HepG2 (cell line): ENCODE measurements at regions of chr6 and their contacts with region 1.

Region 1: GRCh38 chr6:75208298-75209183 is 2.7 kb upstream of the COL12A1 start:
- DNase-seq: peak; percentile 58
- ATAC-seq: peak; percentile 91
- H3K4me3 ChIP-seq: no peak overlapping the region
- H3K27ac ChIP-seq: no peak overlapping the region
- H3K4me1 ChIP-seq: no peaks in the 10 kb centered on the region; the same call in 1 of the 2 replicates
- H3K27me3 ChIP-seq: peaks cover 5 to 51% of the 10 kb centered on the region in 2 experiments; a peak in 4 of 5 replicates
- CTCF ChIP-seq: peak; percentile 89
- EP300 ChIP-seq: no peak
- POLR2A ChIP-seq: no peak
- RAD21 ChIP-seq: peak; percentile 80

Region 2: DNA sequence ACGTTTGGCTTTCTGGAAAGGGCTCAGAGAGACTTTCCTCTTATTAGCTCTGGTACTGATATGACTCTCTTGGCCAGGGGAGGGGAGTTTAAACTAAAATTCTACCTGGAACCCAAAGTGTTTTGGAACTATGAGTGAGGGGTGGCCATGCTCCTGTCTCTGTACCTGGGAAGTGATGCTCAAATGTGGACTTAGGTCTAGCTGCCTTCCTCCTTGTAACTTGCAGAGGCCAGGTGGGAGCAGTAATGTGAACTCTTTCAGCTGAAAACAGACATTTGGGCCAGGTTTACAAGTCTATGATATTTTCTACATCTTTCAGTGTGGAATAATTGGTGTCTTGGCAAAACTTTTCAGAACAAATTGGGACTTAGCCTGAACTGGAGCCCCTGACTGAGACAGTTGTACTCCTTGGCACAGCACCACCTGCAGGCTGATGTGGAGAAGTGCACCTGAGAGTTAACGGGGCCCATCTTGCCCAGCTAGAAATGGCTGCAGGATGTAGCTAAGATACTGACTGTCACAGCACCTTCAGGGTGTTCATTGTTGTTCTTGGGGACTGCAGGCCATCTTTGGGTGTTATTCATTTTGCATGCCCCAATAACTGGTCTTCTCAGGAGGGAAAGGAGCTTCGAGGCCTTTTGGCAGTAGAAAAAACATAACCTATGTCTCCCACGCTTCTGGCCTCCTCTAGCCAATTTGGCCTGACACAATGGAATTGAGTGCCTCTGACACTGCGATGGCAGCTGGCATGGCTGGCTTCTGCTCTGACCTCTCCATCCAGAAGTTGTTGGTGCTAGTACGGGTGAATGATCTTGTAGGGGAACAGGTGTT is 1475.5 kb before region 1 on chr6:
- CTCF ChIA-PET with region 1: no interaction called
- POLR2A ChIA-PET with region 1: no interaction called
- in situ Hi-C with region 1: loop called (anchors 25 kb)
- intact Hi-C with region 1: no loop called
- DNase-seq: peak; percentile 53
- ATAC-seq: peak; percentile 97
- H3K4me3 ChIP-seq: no peak overlapping the region
- H3K27ac ChIP-seq: no peak overlapping the region
- H3K4me1 ChIP-seq: no peaks in the 10 kb centered on the region
- H3K27me3 ChIP-seq: no peaks in the 10 kb centered on the region
- CTCF ChIP-seq: peak; percentile 89
- EP300 ChIP-seq: no peak
- POLR2A ChIP-seq: no peak
- RAD21 ChIP-seq: peak; percentile 46; the same call in 1 of the 2 replicates

Region 3: DNA sequence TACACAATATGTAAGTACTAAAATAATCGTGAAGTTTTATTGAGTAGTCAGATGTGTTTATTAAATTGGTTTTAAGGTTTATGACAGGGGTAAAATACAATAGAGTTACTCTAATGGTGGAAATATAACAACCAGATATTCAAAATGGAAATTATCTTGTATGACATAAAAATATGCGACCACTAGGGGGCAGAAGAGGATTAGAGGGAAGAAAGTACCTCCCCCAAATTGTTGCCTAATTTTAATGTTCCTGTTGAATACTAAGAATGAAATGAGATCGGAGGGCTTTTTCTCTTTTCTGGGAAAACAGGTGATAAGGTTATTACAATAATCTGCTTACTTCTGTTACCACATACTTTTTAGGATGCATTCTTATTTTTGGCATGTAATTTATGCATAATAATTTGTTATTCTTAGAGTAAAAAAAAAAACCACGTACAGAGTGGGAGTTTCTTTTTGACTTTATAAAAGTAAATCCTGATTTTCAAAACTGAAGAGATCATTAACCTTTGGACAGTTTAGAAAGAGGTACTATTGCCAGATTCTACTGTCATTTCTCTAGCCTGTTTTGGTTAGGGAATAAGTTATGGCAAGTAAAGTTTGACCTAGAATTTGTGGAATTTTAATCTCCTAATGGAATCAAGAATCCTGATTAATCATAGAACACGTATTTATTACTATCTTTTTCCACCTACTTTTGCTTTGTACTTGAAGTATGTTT is 1353.4 kb before region 1 on chr6:
- CTCF ChIA-PET with region 1: interaction called, 7 read pairs
- POLR2A ChIA-PET with region 1: no interaction called
- in situ Hi-C with region 1: no loop called
- intact Hi-C with region 1: loop called (anchors 10 kb)
- DNase-seq: peak; percentile 46
- ATAC-seq: no peak
- H3K4me3 ChIP-seq: no peak overlapping the region
- H3K27ac ChIP-seq: no peak overlapping the region
- H3K4me1 ChIP-seq: no peaks in the 10 kb centered on the region
- H3K27me3 ChIP-seq: no peaks in the 10 kb centered on the region
- CTCF ChIP-seq: peak; percentile 54
- EP300 ChIP-seq: no peak
- POLR2A ChIP-seq: no peak
- RAD21 ChIP-seq: no peak

Region 4: DNA sequence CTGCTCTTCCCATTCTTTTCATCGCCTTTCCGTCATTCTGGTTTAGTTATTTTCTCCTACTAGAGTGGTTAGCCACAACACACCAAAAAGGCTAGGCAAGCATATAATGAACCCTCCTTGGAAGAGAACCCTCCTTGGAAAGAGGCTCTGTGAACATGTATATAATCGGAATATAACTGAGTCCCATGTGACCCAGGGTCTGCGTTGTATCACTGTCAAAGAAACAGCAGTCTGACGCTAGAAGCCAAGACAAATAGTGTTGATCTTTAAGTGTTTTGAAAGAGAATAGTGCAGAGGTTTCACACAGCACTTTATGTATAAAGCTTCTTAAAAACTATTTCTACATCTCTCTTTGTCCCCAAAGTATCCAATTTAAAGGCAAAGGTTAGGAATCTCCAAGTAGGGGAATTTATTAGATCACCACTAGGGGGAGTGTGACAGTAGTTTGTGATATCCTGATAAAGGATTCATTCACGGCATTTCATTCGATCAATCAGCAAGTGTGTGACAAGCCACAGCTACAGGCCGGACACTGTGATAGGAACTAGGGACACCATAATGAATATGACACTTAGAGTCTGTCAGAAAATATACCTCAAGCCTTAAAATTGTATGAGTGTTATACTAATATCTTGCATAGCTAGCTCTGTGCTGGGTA is 1117.3 kb before region 1 on chr6:
- CTCF ChIA-PET with region 1: interaction called, 7 read pairs
- POLR2A ChIA-PET with region 1: no interaction called
- in situ Hi-C with region 1: loop called (anchors 10 kb)
- intact Hi-C with region 1: loop called (anchors 1 kb)
- DNase-seq: peak; percentile 45
- ATAC-seq: peak; percentile 85
- H3K4me3 ChIP-seq: no peak overlapping the region
- H3K27ac ChIP-seq: no peak overlapping the region
- H3K4me1 ChIP-seq: no peaks in the 10 kb centered on the region
- H3K27me3 ChIP-seq: no peaks in the 10 kb centered on the region
- CTCF ChIP-seq: peak; percentile 61
- EP300 ChIP-seq: no peak
- POLR2A ChIP-seq: no peak
- RAD21 ChIP-seq: no peak

Region 5: GRCh38 chr6:74409447-74409846 is 799.1 kb before region 1 on chr6:
- CTCF ChIA-PET with region 1: interaction called, 5 read pairs
- POLR2A ChIA-PET with region 1: no interaction called
- in situ Hi-C with region 1: loop called (anchors 25 kb)
- intact Hi-C with region 1: loop called (anchors 2 kb)
- DNase-seq: peak; percentile 36
- ATAC-seq: peak; percentile 78
- H3K4me3 ChIP-seq: no peak overlapping the region
- H3K27ac ChIP-seq: no peak overlapping the region
- H3K4me1 ChIP-seq: no peaks in the 10 kb centered on the region
- H3K27me3 ChIP-seq: no peaks in the 10 kb centered on the region
- CTCF ChIP-seq: peak; percentile 64
- EP300 ChIP-seq: no peak
- POLR2A ChIP-seq: no peak
- RAD21 ChIP-seq: peak; percentile 61; the same call in 1 of the 2 replicates

Region 6: DNA sequence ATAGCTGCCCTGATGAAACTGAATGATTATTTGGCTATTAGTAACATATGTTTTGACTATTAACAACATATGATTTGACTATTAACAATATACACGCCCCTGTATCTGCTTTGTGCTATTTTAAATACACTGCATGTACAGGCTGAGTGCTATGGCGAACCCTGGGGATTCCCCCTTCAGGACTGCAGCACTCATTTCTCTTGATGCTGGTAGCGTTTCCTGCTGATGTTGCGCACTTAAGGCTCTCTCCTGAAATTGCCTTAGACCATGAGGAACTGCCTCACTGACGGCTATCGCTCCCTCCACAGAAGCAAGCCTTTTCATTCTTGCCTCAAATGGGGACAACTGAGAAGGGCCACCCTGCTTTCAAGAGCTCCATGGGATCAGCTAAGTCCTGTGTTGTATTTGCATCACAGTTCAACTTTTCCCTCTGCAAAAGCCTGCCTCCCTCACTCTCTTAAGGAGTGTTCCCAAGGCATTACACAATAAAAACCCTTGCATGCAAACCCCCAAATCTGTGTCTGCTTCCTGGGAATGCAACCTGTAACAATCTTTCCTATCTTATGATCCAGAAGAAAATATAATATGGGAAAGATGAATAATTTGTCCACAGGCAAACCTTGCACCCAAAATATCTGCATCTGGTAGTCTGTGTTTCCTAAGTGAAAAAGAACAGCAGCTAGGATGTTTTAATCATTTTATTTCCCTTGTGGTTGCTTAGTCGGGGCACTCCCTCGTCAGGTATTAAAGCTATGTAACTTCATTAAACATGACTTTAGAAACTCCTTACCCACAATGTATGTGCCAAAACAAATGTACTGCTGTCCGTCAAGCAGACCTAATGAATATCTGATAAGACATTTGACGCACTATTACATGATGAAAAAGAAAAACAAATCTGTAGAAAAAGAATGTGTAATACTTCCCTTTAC is 459.1 kb before region 1 on chr6:
- CTCF ChIA-PET with region 1: interaction called, 7 read pairs
- POLR2A ChIA-PET with region 1: no interaction called
- in situ Hi-C with region 1: loop called (anchors 10 kb)
- intact Hi-C with region 1: loop called (anchors 1 kb)
- DNase-seq: no peak
- ATAC-seq: no peak
- H3K4me3 ChIP-seq: no peak overlapping the region
- H3K27ac ChIP-seq: no peak overlapping the region
- H3K4me1 ChIP-seq: no peaks in the 10 kb centered on the region
- H3K27me3 ChIP-seq: no peaks in the 10 kb centered on the region
- CTCF ChIP-seq: no peak
- EP300 ChIP-seq: no peak
- POLR2A ChIP-seq: no peak
- RAD21 ChIP-seq: no peak

Region 7: DNA sequence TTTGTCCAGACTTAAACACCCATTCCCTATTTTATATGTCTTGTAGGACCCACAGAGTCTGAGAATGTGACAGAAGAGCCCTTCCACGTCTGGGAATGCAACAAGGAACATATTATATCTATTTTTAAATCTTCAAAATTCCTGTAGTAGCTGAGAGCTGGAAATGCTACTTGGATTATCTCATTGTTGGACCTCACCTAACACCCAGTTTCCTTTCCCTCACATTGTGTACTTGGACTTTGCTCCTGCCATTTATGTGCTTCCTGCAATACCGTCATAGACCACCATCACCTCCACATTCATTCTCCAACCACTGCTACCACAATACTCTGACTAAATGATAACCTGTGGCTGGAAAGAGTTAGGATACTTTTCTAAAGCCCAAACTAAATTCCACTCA is 338.1 kb before region 1 on chr6:
- CTCF ChIA-PET with region 1: no interaction called
- POLR2A ChIA-PET with region 1: no interaction called
- in situ Hi-C with region 1: no loop called
- intact Hi-C with region 1: no loop called
- DNase-seq: peak; percentile 69
- ATAC-seq: peak; percentile 98
- H3K4me3 ChIP-seq: no peak overlapping the region
- H3K27ac ChIP-seq: no peak overlapping the region
- H3K4me1 ChIP-seq: peaks cover 11% of the 10 kb centered on the region
- H3K27me3 ChIP-seq: no peaks in the 10 kb centered on the region
- CTCF ChIP-seq: no peak
- EP300 ChIP-seq: no peak
- POLR2A ChIP-seq: no peak
- RAD21 ChIP-seq: no peak

Region 8: DNA sequence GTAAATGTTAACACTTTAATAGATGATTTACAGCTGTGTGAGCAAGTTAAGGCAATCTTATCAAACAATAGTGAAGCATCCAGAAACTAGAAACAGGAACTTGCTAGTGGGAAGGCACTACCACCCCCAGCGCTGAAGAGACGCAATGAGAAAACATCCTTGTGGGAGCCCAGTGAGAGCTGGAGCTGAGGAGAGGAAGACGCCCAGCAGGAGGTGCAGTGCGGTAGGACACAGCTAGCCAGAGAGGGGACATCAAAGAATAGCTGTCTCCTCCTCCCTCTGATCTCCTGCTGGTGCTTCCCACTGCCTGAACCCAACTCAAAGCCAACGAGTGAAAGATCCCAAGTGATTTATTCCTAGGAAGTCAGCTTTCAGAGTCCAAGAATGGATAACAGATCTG is 143.0 kb before region 1 on chr6:
- CTCF ChIA-PET with region 1: no interaction called
- POLR2A ChIA-PET with region 1: no interaction called
- in situ Hi-C with region 1: no loop called
- intact Hi-C with region 1: loop called (anchors 1 kb)
- DNase-seq: no peak
- ATAC-seq: peak; percentile 80
- H3K4me3 ChIP-seq: no peak overlapping the region
- H3K27ac ChIP-seq: no peak overlapping the region
- H3K4me1 ChIP-seq: no peaks in the 10 kb centered on the region
- H3K27me3 ChIP-seq: no peaks in the 10 kb centered on the region
- CTCF ChIP-seq: 0 out of 2 replicates have a peak, but pooled peaks have one; percentile 29
- EP300 ChIP-seq: no peak
- POLR2A ChIP-seq: no peak
- RAD21 ChIP-seq: no peak

Region 9: GRCh38 chr6:75158176-75158575 is 50.4 kb before region 1 on chr6:
- CTCF ChIA-PET with region 1: no interaction called
- POLR2A ChIA-PET with region 1: no interaction called
- in situ Hi-C with region 1: no loop called
- intact Hi-C with region 1: no loop called
- DNase-seq: no peak
- ATAC-seq: no peak
- H3K4me3 ChIP-seq: no peak overlapping the region
- H3K27ac ChIP-seq: no peak overlapping the region
- H3K4me1 ChIP-seq: no peaks in the 10 kb centered on the region
- H3K27me3 ChIP-seq: no peaks in the 10 kb centered on the region
- CTCF ChIP-seq: no peak
- EP300 ChIP-seq: no peak
- POLR2A ChIP-seq: no peak
- RAD21 ChIP-seq: no peak

Region 10: DNA sequence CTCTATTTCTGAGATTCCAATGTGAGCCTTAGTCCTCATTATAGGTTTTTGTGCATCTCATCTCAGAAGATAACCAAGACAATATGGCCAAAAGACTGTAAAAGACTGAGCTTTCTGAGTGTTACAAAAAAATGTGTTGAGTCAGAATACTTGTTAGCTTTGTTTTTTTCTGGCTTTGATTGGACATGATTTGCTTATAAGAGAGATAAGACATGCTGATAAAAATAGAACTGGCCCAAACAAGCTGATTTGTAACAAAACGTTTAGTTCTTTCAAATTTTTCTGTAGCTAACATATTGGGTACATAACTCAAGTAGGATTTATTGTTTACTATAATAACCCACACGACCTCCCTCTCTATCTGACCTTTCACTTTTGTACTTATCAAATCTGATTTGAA is 252.1 kb after region 1 on chr6:
- CTCF ChIA-PET with region 1: no interaction called
- POLR2A ChIA-PET with region 1: no interaction called
- in situ Hi-C with region 1: no loop called
- intact Hi-C with region 1: no loop called
- DNase-seq: no peak
- ATAC-seq: no peak
- H3K4me3 ChIP-seq: no peak overlapping the region
- H3K27ac ChIP-seq: no peak overlapping the region
- H3K4me1 ChIP-seq: no peaks in the 10 kb centered on the region
- H3K27me3 ChIP-seq: no peaks in the 10 kb centered on the region; a peak in 1 of 5 replicates
- CTCF ChIP-seq: no peak
- EP300 ChIP-seq: no peak
- POLR2A ChIP-seq: no peak
- RAD21 ChIP-seq: no peak